ENCODE measurements at regions of chr16 and their contacts with region 1.

Region 1: DNA sequence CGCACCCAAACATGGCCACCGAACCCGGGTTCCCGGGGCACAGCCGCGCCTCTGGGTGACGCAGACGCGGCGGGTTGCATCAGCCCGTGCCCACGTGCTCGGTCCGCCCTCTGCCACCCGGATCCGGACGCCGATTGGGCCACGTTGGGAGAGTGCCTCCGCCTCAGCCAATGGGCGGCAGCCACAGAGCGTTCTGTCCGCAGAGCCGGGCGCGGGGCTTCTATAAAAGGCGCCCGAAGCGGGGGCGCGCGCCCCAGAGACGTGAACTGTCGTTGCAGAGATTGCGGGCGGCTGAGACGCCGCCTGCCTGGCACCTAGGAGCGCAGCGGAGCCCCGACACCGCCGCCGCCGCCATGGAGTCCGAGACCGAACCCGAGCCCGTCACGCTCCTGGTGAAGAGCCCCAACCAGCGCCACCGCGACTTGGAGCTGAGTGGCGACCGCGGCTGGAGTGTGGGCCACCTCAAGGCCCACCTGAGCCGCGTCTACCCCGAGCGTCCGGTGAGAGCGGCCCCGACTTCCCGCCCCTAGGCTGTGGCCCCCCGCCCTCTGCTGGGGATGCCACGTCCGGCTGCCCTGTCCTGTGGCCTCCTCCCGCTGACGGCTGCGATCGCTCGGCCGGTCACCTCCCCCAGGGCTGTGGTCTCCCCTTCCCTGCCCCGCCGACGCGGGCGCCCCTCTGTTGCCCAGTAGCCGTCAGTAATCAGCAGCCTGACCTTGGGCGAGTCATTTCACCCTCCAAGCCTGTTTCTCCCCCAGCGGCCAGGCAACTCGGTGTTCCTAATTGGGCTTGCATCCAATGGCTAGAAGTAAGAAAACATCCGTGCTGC is at the start of gene HERPUD1:
- DNase-seq: peak; percentile 99
- H3K4me3 Mint-ChIP-seq: peak within 1 kb of the TSS; percentile 96
- H3K27ac Mint-ChIP-seq: peak within 1 kb of the TSS; percentile 100
- H3K4me1 Mint-ChIP-seq: peaks cover 12% of the 10 kb centered on the region
- H3K27me3 Mint-ChIP-seq: peaks cover 13% of the 10 kb centered on the region
- CTCF ChIP-seq: peak; percentile 20
- total RNA-seq, gene HERPUD1: 111 and 116 TPM in 2 replicates

Region 2: GRCh38 chr16:57084257-57084770 is 152.2 kb after region 1 on chr16:
- CTCF ChIA-PET with region 1: no interaction called
- intact Hi-C with region 1: no loop called
- DNase-seq: peak; percentile 76
- H3K4me3 Mint-ChIP-seq: no peak overlapping the region
- H3K27ac Mint-ChIP-seq: no peak overlapping the region
- H3K4me1 Mint-ChIP-seq: no peaks in the 10 kb centered on the region
- H3K27me3 Mint-ChIP-seq: peaks cover 66% of the 10 kb centered on the region
- CTCF ChIP-seq: peak; percentile 94

Region 3: DNA sequence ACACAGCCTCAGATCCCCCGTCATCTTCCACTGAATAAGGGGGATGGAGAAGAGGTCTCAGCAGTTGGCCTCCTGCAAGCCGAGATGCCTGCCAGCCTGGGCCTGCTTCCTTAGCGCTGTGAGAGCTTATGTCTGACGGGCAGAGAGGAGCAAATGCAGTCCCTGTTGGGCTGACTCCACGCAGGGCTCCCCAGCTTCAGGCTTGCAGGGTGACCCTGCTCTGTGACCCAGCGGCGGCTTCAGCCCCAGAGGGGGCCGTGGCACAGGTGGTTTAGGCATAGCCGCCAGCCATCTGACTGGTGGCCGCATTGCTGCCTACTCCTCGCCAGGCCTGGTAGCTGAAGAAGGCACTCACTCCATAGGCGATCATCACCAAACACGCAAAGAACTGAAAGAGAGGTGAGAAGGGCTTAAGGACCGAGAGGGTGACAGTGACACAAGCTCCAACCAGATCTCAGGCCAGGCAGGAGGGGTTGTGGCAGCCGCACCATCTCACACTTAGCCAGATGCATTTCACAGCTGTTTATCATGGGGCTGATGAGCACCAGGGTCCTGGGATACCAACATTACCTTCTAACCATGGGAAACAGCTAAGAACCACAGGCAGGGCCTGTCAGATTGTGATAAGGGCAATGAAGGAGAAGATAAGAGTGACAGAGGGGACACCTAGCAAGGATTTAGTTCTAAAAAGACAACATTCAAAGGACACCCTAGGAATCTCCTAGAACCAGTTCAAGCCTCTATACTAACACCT is 324.7 kb after region 1 on chr16:
- CTCF ChIA-PET with region 1: no interaction called
- intact Hi-C with region 1: loop called (anchors 10 kb)
- DNase-seq: no peak
- H3K4me3 Mint-ChIP-seq: no peak overlapping the region
- H3K27ac Mint-ChIP-seq: no peak overlapping the region
- H3K4me1 Mint-ChIP-seq: peaks cover 35% of the 10 kb centered on the region
- H3K27me3 Mint-ChIP-seq: no peaks in the 10 kb centered on the region
- CTCF ChIP-seq: no peak